AG04450 (cell line): ENCODE measurements at regions of chrX and their contacts with region 1.

Region 1: DNA sequence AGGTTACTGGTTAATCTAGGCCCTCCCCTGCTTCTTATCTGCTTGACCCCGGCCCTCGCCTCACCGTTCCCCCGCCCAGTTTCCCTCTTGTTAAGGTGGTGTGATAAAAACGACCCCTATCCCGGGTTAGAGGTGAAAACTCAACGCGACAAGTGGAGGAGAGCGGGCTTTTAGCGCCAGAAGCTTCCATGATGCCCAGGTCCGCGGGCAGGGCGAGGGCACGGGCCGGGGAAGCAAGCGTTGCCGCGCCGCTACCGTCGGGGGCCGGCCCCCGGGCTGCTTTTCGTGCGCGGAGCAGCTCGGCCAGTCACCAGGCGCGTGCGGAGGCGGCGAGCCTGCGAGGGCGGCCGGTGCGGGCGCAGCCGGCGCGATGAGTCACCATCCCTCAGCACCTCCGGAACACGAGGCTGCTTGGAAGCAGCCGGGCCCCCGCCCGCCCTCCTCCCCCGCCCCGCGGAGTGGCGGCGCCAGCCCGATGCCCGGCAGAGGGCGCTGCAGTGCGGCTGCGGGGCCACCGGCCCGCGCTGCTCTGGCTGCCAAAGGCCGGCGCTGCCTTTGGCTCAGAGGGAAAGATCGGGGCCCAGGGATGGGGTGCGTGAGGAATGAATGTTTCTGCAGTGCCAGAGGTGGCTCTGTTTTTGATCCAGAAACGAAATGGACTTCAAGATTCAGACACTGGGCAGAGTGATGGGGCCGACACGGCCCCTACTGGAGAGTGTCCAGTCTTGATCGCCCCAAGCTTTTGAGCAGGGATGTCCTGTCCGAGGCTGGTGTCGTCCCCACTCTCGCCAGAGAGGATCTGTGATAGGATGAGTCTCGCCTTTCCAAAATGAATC is 107.8 kb downstream of the NHSL2 start:
- DNase-seq: peak; percentile 57
- H3K4me3 ChIP-seq: peak overlapping the region; percentile 15; the same call in 1 of the 2 replicates
- H3K27ac ChIP-seq: no peak overlapping the region
- H3K27me3 ChIP-seq: no peaks in the 10 kb centered on the region
- CTCF ChIP-seq: peak; percentile 39; the same call in 1 of the 2 replicates

Region 2: GRCh38 chrX:71998836-71999509 is 19.5 kb before region 1 on chrX:
- CTCF ChIA-PET with region 1: interaction called, 29 read pairs
- POLR2A ChIA-PET with region 1: no interaction called
- DNase-seq: no peak
- H3K4me3 ChIP-seq: no peak overlapping the region
- H3K27ac ChIP-seq: no peak overlapping the region
- H3K27me3 ChIP-seq: no peaks in the 10 kb centered on the region
- CTCF ChIP-seq: peak; percentile 63

Region 3: DNA sequence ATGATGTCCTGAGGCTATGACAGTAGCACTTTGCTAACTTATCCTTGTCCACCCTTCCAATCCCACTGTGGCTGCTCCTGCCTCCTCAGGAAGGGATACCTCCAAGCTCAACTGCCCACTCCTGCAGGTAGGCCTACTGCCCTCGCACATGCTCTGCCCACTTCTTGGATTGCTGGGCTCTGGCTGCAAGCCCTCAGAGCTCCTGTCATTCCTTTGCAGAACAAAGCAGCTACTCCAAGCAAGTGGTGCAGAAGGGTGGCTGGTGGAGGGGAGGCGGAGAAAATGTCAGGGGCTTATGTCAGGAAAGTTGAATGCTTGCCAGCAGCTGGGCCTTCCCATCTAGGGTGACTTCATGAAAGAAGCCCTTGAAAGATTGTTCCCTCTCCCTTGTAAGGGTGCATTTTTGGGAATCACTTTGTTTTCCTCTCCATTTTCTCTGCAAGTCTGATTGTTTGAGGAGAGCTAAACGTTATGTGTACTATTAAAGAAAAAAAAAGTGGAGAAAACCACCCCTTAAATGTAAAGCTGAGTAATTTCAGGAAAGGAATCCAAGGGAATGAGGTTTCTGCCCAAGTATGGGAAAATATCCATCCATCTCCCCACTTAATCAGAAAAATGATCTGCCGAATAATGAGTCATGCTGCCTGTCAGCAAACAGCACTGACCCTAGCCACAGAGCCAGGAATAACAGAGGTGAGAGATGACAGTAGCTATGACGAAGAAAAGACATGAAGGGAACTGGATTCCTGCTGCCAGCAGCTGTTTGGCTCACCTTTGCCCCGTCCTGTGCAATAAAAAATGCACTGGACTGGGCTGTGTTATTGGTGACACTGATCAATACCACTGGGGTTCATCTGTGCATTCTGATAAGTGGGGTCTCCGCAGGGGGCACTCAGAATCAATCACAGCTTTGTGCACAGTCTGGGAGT is 11.3 kb after region 1 on chrX:
- CTCF ChIA-PET with region 1: interaction called, 12 read pairs
- POLR2A ChIA-PET with region 1: interaction called, 8 read pairs
- DNase-seq: peak; percentile 56
- H3K4me3 ChIP-seq: peak overlapping the region; percentile 20
- H3K27ac ChIP-seq: peak overlapping the region; percentile 65
- H3K27me3 ChIP-seq: no peaks in the 10 kb centered on the region
- CTCF ChIP-seq: no peak